CD8-positive, alpha-beta T cell (primary cell): ENCODE measurements at regions of chr14 and their contacts with region 1.

Region 1: DNA sequence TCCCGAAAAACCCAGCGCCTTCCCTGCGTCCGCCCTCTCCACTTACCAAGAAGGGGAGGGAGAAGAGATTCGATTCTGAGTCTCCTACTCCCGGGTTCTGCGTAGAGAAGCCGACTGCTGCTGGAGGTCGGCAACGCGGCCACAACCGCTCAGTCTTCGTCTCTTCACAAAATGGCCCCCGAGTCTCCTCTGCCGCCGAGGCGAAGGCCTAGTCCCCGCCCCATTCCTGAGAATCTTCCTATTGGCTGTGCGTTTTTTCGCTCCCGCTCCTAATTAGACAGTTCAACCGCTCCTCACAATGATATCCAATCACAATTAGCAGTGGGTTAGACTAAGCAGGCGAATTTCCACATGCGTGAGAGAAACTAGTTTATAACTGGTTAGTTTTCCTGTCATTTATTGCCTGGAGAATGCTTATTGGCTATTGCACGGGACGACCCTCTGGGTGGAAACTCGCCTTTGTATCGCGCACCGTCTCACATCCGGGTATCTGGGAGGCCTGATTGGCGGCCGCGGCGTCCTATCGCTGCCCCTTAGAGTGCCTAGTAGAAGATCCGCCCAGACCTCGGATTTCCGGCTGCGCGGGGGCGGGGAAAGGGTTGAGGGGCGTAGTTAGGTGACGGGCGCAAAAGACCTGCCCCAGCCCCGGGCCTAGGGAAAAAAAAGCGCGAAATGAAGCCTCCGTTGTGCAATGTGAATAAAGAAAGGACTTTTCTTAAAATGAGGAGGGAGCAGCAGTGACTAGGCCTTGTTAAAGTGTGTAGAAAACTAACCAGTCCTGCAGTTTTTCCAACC is at the start of gene HNRNPC:
- DNase-seq: peak; percentile 100
- ATAC-seq: peak; percentile 85
- H3K4me3 ChIP-seq: peak within 1 kb of the TSS; percentile 68 to 89
- H3K4me3 Mint-ChIP-seq: peak within 1 kb of the TSS; percentile 99
- H3K27ac ChIP-seq: peak within 1 kb of the TSS; percentile 80 to 96
- H3K27ac Mint-ChIP-seq: peak within 1 kb of the TSS; percentile 100
- H3K4me1 ChIP-seq: peaks cover 28% of the 10 kb centered on the region
- H3K4me1 Mint-ChIP-seq: peaks cover 35% of the 10 kb centered on the region
- H3K27me3 ChIP-seq: no peaks in the 10 kb centered on the region
- H3K27me3 Mint-ChIP-seq: no peaks in the 10 kb centered on the region
- CTCF ChIP-seq: no peak
- total RNA-seq, gene HNRNPC: 621 to 624 TPM

Region 2: DNA sequence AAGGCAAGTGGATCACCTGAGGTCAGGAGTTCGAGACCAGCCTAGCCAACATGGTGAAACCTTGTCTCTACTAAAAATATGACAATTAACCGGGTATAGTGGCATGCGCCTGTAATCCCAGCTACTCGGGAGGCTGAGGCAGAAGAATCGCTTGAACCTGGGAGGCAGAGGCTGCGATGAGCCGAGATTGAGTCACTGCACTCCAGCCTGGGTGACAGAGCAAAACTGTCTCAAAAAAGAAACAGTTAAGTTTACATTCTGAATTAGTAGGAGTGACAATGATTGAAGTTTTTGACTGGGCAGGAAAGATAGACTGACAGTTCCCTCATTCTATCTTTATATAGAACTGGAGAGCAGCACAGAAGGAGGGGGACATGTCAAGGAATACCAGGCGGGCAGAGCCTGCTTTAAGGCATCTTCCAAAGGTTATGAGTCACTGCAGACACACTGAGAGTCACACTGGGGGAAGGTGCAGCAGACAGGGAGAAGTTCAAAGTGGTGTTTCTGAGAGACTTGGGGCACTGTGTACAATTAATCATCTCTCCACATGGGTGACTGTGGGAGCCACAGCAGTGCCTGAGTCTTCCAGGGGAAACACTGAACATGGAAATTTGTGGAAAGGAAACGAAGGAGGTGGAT is 421.0 kb before region 1 on chr14:
- CTCF ChIA-PET with region 1: no interaction called
- POLR2A ChIA-PET with region 1: no interaction called
- intact Hi-C with region 1: no loop called
- DNase-seq: no peak
- ATAC-seq: no peak
- H3K4me3 ChIP-seq: no peak overlapping the region
- H3K4me3 Mint-ChIP-seq: no peak overlapping the region
- H3K27ac ChIP-seq: no peak overlapping the region
- H3K27ac Mint-ChIP-seq: no peak overlapping the region
- H3K4me1 ChIP-seq: no peaks in the 10 kb centered on the region
- H3K4me1 Mint-ChIP-seq: no peaks in the 10 kb centered on the region
- H3K27me3 ChIP-seq: no peaks in the 10 kb centered on the region
- H3K27me3 Mint-ChIP-seq: peaks cover 6% of the 10 kb centered on the region
- CTCF ChIP-seq: no peak

Region 3: GRCh38 chr14:21185491-21185890 is 84.0 kb before region 1 on chr14:
- CTCF ChIA-PET with region 1: no interaction called
- POLR2A ChIA-PET with region 1: no interaction called
- intact Hi-C with region 1: no loop called
- DNase-seq: no peak
- ATAC-seq: no peak
- H3K4me3 ChIP-seq: no peak overlapping the region
- H3K4me3 Mint-ChIP-seq: no peak overlapping the region
- H3K27ac ChIP-seq: no peak overlapping the region
- H3K27ac Mint-ChIP-seq: no peak overlapping the region
- H3K4me1 ChIP-seq: no peaks in the 10 kb centered on the region
- H3K4me1 Mint-ChIP-seq: no peaks in the 10 kb centered on the region
- H3K27me3 ChIP-seq: no peaks in the 10 kb centered on the region
- H3K27me3 Mint-ChIP-seq: peaks cover 5% of the 10 kb centered on the region
- CTCF ChIP-seq: no peak

Region 4: DNA sequence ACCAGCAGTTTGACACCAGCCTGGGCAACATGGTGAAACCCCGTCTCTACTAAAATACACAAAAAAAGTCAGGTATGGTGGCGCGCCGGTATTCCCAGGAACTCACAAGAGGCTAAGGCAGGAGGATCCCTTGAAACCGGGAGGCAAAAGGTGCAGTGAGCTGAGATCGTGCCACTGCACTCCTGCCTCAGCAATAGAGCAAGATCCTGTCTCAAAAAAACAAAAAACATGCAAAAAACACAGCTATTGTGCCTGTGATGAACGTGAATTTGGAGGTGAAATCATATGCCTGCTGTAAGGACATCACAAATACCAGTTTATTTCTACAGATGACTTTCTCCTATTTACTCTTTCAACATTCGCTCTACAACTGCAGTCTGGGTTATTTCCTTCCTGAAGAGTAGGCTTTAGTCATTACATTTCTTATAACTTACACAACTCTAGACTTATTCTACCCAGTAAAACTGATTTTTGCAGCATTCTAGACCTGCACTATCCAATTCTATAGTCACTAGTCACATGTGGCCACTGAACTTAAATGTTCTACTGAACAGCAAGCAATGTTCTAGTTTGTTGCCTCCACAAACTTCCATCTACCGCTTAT is 48.5 kb before region 1 on chr14:
- CTCF ChIA-PET with region 1: no interaction called
- POLR2A ChIA-PET with region 1: interaction called, 4 read pairs
- intact Hi-C with region 1: loop called in 1 of 2 experiments (anchors 10 kb)
- DNase-seq: no peak
- ATAC-seq: peak; percentile 33
- H3K4me3 ChIP-seq: no peak overlapping the region
- H3K4me3 Mint-ChIP-seq: peak overlapping the region; percentile 27
- H3K27ac ChIP-seq: peak overlapping the region in 1 of 2 experiments; percentile 9
- H3K27ac Mint-ChIP-seq: peak overlapping the region; percentile 83
- H3K4me1 ChIP-seq: peaks cover 46% of the 10 kb centered on the region
- H3K4me1 Mint-ChIP-seq: peaks cover 72% of the 10 kb centered on the region
- H3K27me3 ChIP-seq: no peaks in the 10 kb centered on the region
- H3K27me3 Mint-ChIP-seq: no peaks in the 10 kb centered on the region
- CTCF ChIP-seq: no peak

Region 5: DNA sequence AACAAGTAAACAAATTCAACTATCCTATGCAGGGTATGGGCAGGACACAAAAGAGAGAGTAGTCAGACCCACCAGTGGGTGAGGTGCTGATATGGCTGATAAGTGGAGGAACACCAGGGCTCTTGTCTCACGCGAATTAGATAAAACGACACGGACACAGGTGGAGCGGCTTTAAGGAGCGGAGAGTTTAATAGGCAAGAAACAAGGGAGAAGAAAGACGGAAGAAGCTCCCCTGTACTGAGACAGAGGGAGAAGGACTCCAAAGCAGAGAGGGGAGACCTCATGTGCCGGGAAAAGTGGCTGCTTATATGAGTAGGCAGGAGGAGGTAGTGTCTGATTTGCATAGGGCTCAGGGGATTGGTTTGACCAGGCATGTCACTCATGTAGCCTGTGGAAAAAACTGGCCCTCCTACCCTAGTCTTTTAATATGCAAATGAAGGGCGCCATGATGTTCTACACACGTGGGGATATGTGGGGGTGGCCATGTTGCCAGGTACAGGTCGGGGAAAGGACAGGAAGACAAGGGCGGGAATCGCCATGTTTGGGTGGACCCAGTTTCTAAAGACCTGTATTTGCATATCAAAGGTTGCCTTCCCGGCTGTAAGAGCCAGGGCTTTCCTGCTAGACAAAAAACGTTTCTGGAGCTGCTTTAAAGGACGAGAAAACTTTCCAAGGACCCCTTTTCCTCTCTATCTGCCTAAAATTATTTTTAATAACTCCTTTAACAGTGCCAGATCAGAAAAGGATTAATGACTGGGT is 39.2 kb after region 1 on chr14:
- CTCF ChIA-PET with region 1: interaction called, 3 read pairs
- POLR2A ChIA-PET with region 1: interaction called, 4 read pairs
- intact Hi-C with region 1: loop called (anchors 1 to 5 kb)
- DNase-seq: peak; percentile 42 to 87 (median 73)
- ATAC-seq: peak; percentile 87
- H3K4me3 ChIP-seq: peak overlapping the region; percentile 42 to 44
- H3K4me3 Mint-ChIP-seq: peak overlapping the region; percentile 73
- H3K27ac ChIP-seq: peak overlapping the region; percentile 16 to 62
- H3K27ac Mint-ChIP-seq: peak overlapping the region; percentile 60
- H3K4me1 ChIP-seq: peaks cover 7% of the 10 kb centered on the region
- H3K4me1 Mint-ChIP-seq: peaks cover 17% of the 10 kb centered on the region
- H3K27me3 ChIP-seq: no peaks in the 10 kb centered on the region
- H3K27me3 Mint-ChIP-seq: no peaks in the 10 kb centered on the region
- CTCF ChIP-seq: no peak

Region 6: GRCh38 chr14:21437063-21437901 is 167.8 kb after region 1 on chr14:
- CTCF ChIA-PET with region 1: no interaction called
- POLR2A ChIA-PET with region 1: interaction called, 7 read pairs
- intact Hi-C with region 1: loop called (anchors 1 to 2 kb)
- DNase-seq: peak; percentile 98 to 100 (median 99)
- ATAC-seq: peak; percentile 99
- H3K4me3 ChIP-seq: peak overlapping the region; percentile 74 to 83
- H3K4me3 Mint-ChIP-seq: peak overlapping the region; percentile 96
- H3K27ac ChIP-seq: peak overlapping the region; percentile 76 to 84
- H3K27ac Mint-ChIP-seq: peak overlapping the region; percentile 91
- H3K4me1 ChIP-seq: peaks cover 28% of the 10 kb centered on the region
- H3K4me1 Mint-ChIP-seq: peaks cover 64% of the 10 kb centered on the region
- H3K27me3 ChIP-seq: no peaks in the 10 kb centered on the region
- H3K27me3 Mint-ChIP-seq: no peaks in the 10 kb centered on the region
- CTCF ChIP-seq: no peak

Region 7: GRCh38 chr14:21476925-21477681 is 207.7 kb after region 1 on chr14 and contains the starts of genes RAB2B and TOX4:
- CTCF ChIA-PET with region 1: no interaction called
- POLR2A ChIA-PET with region 1: no interaction called
- intact Hi-C with region 1: loop called (anchors 1 to 2 kb)
- DNase-seq: peak; percentile 86 to 99 (median 95)
- ATAC-seq: peak; percentile 96
- H3K4me3 ChIP-seq: peak within 1 kb of the TSS; percentile 87 to 94
- H3K4me3 Mint-ChIP-seq: peak within 1 kb of the TSS; percentile 99
- H3K27ac ChIP-seq: peak within 1 kb of the TSS; percentile 93 to 94
- H3K27ac Mint-ChIP-seq: peak within 1 kb of the TSS; percentile 99
- H3K4me1 ChIP-seq: peaks cover 22% of the 10 kb centered on the region
- H3K4me1 Mint-ChIP-seq: peaks cover 52% of the 10 kb centered on the region
- H3K27me3 ChIP-seq: no peaks in the 10 kb centered on the region
- H3K27me3 Mint-ChIP-seq: no peaks in the 10 kb centered on the region
- CTCF ChIP-seq: peak; percentile 98
- total RNA-seq, gene RAB2B: 24.0 to 26.6 TPM
- total RNA-seq, gene TOX4: 95.0 to 100 TPM

Region 8: DNA sequence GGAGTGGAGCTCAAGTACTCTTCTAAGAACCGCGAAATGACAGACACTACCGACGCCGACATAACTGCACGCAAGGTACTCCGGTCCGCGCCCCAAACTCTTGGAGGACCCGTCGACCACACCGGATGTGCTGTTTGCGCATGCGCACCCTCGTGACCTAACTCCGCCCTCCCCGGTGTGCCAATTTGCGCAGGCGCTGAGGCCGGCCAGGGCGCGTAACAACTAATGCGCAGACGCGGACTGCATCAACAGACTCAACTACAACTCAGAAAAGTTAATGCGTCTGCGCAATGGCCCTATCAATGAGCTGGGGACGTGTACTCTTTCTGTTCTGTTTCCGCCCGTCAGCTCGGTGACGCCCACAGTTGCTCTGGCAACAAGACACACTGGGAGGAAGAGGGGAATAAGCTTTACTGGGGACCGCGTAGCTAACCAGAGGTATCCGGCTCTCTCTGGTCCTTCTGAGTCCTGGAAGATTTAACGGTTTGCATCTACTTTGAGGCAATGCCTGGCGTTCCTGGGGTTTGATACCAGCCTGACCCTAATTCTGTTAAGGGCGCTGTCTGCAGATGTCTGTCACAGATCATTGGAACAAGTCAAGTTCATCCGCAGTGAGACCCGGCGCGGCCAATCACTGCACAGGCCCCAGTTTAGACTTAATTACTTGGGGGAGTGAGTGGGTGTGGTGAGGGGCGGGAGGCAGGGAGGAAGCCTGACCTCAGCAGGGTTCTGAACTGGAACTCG is 1319.8 kb after region 1 on chr14 and contains the start of gene DAD1:
- CTCF ChIA-PET with region 1: no interaction called
- POLR2A ChIA-PET with region 1: no interaction called
- intact Hi-C with region 1: loop called in 1 of 2 experiments (anchors 10 kb)
- DNase-seq: peak; percentile 99 to 100 (median 100)
- ATAC-seq: peak; percentile 86
- H3K4me3 ChIP-seq: peak within 1 kb of the TSS; percentile 64 to 67
- H3K4me3 Mint-ChIP-seq: peak within 1 kb of the TSS; percentile 98
- H3K27ac ChIP-seq: peak within 1 kb of the TSS; percentile 95 to 99
- H3K27ac Mint-ChIP-seq: peak within 1 kb of the TSS; percentile 100
- H3K4me1 ChIP-seq: peaks cover 47% of the 10 kb centered on the region
- H3K4me1 Mint-ChIP-seq: peaks cover 49% of the 10 kb centered on the region
- H3K27me3 ChIP-seq: no peaks in the 10 kb centered on the region
- H3K27me3 Mint-ChIP-seq: no peaks in the 10 kb centered on the region
- CTCF ChIP-seq: no peak
- total RNA-seq, gene DAD1: 27.2 to 35.6 TPM